Activated B cell treated with CpG ODN at 0.5 μM for 24 hours (primary cell): ENCODE measurements at regions of chr10 and their contacts with region 1.

Region 1: DNA sequence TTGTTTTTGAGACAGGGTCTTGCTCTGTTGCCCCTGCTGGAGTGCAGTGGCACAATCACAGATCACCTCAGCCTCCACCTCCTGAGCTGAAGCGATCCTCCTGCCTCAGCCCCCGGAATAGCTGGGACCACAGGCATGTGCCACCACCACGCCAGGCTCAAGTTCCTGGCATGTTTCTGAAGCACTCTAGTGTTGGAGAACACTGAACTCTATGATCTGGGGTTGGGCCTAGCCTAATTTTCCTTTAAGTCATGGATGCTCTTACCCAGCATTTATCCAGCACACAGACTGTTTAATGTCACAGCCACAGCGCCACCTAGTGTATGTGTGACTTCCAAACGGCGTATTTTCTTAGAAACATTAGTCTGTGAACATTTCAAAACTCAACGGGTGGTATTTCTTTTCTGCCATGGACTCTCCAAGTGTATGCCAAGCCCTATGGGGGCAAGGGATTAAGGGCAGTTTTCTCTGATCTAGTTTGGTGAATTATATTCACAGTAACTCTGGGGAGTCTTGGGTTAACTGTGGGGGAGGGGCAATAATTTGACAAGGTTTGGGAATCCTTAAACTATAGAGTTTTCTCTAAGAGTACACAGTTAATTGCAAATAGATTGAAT is 91.8 kb downstream of the CREM start:
- DNase-seq: peak; percentile 44
- ATAC-seq: peak; percentile 82
- H3K4me3 Mint-ChIP-seq: no peak overlapping the region
- H3K27ac Mint-ChIP-seq: no peak overlapping the region
- H3K4me1 Mint-ChIP-seq: peaks cover 12% of the 10 kb centered on the region
- H3K27me3 Mint-ChIP-seq: peaks cover 9% of the 10 kb centered on the region
- CTCF ChIP-seq: no peak

Region 2: DNA sequence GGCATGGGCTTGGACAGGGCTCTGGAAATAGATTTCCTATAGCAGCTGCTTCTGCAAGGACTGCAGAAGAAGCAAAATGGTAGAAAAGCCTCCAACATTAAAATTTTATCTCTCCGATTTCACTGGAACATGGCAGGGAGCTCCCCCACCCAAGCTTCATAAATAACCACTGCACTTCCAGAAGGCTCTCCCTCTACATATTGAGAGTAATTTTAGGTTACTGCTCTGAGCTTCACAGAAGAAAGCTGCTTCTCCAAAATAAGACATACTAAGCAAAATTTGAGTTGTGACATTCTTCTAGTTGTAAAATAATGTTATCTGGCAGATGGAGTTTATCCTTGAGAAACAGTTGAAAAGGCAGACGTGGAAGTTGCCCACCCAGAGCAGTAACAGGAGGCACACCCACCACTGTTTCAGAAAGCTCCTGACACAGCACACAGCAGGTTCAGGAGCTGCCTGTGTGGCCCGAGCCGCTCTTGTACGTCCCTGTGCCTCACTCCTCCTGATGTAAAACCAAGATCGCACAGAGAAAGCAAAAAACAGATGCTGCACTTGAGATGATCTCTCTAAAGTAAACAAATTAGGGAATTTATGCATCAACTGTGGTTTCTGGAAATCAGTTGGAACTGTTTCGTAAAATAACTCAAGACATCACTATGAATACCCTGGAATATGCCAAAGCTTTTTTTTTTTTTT is 1024.4 kb before region 1 on chr10:
- CTCF ChIA-PET with region 1: no interaction called
- POLR2A ChIA-PET with region 1: no interaction called
- intact Hi-C with region 1: no loop called
- DNase-seq: no peak
- ATAC-seq: no peak
- H3K4me3 Mint-ChIP-seq: no peak overlapping the region
- H3K27ac Mint-ChIP-seq: no peak overlapping the region
- H3K4me1 Mint-ChIP-seq: no peaks in the 10 kb centered on the region
- H3K27me3 Mint-ChIP-seq: no peaks in the 10 kb centered on the region
- CTCF ChIP-seq: no peak

Region 3: GRCh38 chr10:34655286-34656170 is 562.9 kb before region 1 on chr10:
- CTCF ChIA-PET with region 1: no interaction called
- POLR2A ChIA-PET with region 1: no interaction called
- intact Hi-C with region 1: loop called (anchors 5 kb)
- DNase-seq: no peak
- ATAC-seq: no peak
- H3K4me3 Mint-ChIP-seq: no peak overlapping the region
- H3K27ac Mint-ChIP-seq: no peak overlapping the region
- H3K4me1 Mint-ChIP-seq: no peaks in the 10 kb centered on the region
- H3K27me3 Mint-ChIP-seq: peaks cover 3% of the 10 kb centered on the region
- CTCF ChIP-seq: no peak

Region 4: GRCh38 chr10:34994565-34995142 is 223.8 kb before region 1 on chr10:
- CTCF ChIA-PET with region 1: interaction called, 19 read pairs
- POLR2A ChIA-PET with region 1: no interaction called
- intact Hi-C with region 1: loop called (anchors 2 kb)
- DNase-seq: no peak
- ATAC-seq: peak; percentile 77
- H3K4me3 Mint-ChIP-seq: no peak overlapping the region
- H3K27ac Mint-ChIP-seq: no peak overlapping the region
- H3K4me1 Mint-ChIP-seq: peaks cover 8% of the 10 kb centered on the region
- H3K27me3 Mint-ChIP-seq: no peaks in the 10 kb centered on the region
- CTCF ChIP-seq: no peak

Region 5: GRCh38 chr10:35119378-35119777 is 99.1 kb before region 1 on chr10:
- CTCF ChIA-PET with region 1: interaction called, 198 read pairs
- POLR2A ChIA-PET with region 1: interaction called, 3 read pairs
- intact Hi-C with region 1: loop called (anchors 1 kb)
- DNase-seq: no peak
- ATAC-seq: no peak
- H3K4me3 Mint-ChIP-seq: no peak overlapping the region
- H3K27ac Mint-ChIP-seq: no peak overlapping the region
- H3K4me1 Mint-ChIP-seq: peaks cover 5% of the 10 kb centered on the region
- H3K27me3 Mint-ChIP-seq: no peaks in the 10 kb centered on the region
- CTCF ChIP-seq: no peak

Region 6: GRCh38 chr10:35306852-35307256 is 88.4 kb after region 1 on chr10:
- CTCF ChIA-PET with region 1: no interaction called
- POLR2A ChIA-PET with region 1: no interaction called
- intact Hi-C with region 1: no loop called
- DNase-seq: no peak
- ATAC-seq: no peak
- H3K4me3 Mint-ChIP-seq: no peak overlapping the region
- H3K27ac Mint-ChIP-seq: no peak overlapping the region
- H3K4me1 Mint-ChIP-seq: no peaks in the 10 kb centered on the region
- H3K27me3 Mint-ChIP-seq: peaks cover 19% of the 10 kb centered on the region
- CTCF ChIP-seq: no peak

Region 7: GRCh38 chr10:35398355-35398754 is 179.9 kb after region 1 on chr10:
- CTCF ChIA-PET with region 1: no interaction called
- POLR2A ChIA-PET with region 1: no interaction called
- intact Hi-C with region 1: no loop called
- DNase-seq: no peak
- ATAC-seq: no peak
- H3K4me3 Mint-ChIP-seq: no peak overlapping the region
- H3K27ac Mint-ChIP-seq: no peak overlapping the region
- H3K4me1 Mint-ChIP-seq: peaks cover 56% of the 10 kb centered on the region
- H3K27me3 Mint-ChIP-seq: no peaks in the 10 kb centered on the region
- CTCF ChIP-seq: no peak